ENCODE measurements at regions of chr1 and their contacts with region 1.

Region 1: GRCh38 chr1:6401673-6402072 is 8.1 kb upstream of the ACOT7 start:
- DNase-seq: peak in 1 of 3 donors; percentile 2
- ATAC-seq: peak; percentile 55
- H3K4me3 ChIP-seq: no peak overlapping the region
- H3K4me1 ChIP-seq: peaks cover 8% of the 10 kb centered on the region
- CTCF ChIP-seq: no peak

Region 2: GRCh38 chr1:6245086-6245868 is 156.4 kb before region 1 on chr1:
- intact Hi-C with region 1: loop called in 1 of 2 experiments (anchors 10 kb)
- DNase-seq: peak; percentile 81 to 89 (median 88)
- ATAC-seq: peak; percentile 85
- H3K4me3 ChIP-seq: no peak overlapping the region
- H3K4me1 ChIP-seq: peaks cover 18% of the 10 kb centered on the region
- CTCF ChIP-seq: peak; percentile 75

Region 3: DNA sequence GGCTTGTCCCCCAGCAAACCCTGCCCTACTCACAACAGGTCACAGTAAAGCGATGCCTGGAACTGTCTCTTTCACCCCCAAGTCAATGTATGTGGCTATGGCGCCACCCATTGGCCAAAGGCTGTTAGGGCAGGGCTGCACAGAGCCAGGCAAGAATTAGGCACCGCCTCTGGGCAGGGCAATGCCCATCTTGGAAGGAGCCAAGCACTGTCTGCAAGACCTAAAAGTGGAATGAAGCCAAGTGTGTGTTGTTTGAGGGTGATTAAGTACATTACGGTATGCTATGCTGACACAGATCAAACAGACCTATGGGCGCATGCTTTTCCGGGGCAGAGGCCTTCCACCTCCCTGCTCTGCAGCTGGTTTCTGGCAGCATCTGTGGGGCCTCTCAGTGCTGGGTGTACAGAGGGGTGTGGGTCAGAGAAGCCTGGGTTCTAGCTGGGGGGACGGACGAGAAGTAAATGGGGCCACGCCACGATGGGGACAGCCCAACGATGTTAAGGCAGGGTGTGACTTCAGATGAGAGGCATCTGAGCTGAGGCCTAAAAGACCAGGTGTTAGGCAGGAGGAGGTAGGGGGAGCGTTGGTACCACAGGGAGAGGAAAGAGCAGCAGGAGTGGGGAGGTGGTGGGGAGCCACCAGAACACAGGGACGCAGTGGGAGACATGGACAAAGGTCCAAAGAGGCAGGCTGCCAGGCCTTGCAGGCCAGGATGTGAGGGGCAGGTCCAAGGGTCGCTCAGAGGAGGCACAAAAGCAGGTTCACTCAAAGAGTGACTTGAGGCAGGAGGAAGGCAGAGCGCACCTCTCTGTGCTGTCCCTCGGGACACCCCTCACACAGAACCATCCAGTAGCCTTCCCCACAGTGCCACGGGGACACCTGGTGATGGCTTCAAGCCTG is 57.9 kb before region 1 on chr1:
- intact Hi-C with region 1: loop called in 1 of 2 experiments (anchors 10 kb)
- DNase-seq: peak; percentile 83 to 92 (median 91)
- ATAC-seq: peak; percentile 88
- H3K4me3 ChIP-seq: no peak overlapping the region
- H3K4me1 ChIP-seq: peaks cover 17% of the 10 kb centered on the region
- CTCF ChIP-seq: peak; percentile 89

Region 4: DNA sequence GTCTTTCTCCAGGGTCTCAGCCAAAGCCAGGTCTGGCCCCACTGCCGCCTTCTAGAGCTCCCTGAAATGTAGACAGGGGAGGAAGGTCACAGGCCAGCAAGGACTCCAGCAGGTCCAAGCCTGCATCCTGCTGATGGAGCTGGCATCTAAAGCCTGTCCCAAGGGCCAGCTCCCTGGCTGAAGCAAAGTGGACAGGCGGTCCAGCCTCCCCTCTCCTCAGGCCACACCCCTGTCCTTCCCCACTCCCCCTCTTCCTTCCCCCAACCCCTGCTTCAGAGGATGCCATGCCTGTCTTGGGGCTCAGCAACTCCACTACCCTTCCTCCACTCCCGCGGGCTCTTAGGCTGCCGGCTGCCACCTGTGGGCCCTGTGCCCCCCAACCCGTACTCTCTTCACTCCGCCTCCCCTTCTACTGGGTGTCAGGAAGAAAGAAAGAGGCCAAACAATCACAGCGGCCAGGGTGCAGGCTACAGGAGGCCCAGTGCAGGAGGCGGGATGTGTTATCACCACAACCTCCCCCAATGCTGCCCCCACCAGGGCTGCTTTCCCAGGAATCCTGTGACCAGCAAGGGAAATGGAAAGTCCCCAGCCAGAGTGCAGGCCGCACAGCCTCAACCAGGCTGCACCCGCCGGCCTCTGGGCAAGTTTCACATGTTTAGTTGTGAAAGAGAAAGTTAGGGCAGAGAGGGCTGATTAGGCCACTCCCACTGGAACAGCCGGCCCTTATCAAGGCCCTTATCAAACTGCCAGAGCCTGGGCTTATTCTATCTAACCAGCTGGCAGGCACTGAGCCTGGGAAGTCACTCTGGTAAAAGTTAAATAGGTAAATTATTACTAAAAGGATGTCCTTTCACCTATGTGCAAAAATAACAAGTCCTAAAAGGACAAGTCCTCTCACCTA is 42.2 kb before region 1 on chr1:
- intact Hi-C with region 1: loop called in 1 of 2 experiments (anchors 10 kb)
- DNase-seq: peak; percentile 90 to 91 (median 90)
- ATAC-seq: peak; percentile 79
- H3K4me3 ChIP-seq: no peak overlapping the region
- H3K4me1 ChIP-seq: peaks cover 65% of the 10 kb centered on the region
- CTCF ChIP-seq: no peak

Measured in mucosa of descending colon (tissue), 3 donors.